ENCODE measurements at regions of chr7 and their contacts with region 1.

Region 1: GRCh38 chr7:156827587-156828203 is 65.3 kb downstream of the LMBR1 start:
- DNase-seq: peak; percentile 25 to 39
- ATAC-seq: peak in 1 of 2 experiments; percentile 53; a peak in 2 of 6 replicates
- H3K4me3 ChIP-seq: no peak overlapping the region
- H3K27ac ChIP-seq: no peak overlapping the region
- H3K4me1 ChIP-seq: peaks cover 4% of the 10 kb centered on the region; the same call in 1 of the 3 replicates
- CTCF ChIP-seq: peak; percentile 62
- EP300 ChIP-seq: no peak
- POLR2A ChIP-seq: no peak
- RAD21 ChIP-seq: peak; percentile 42 to 47; a peak in 3 of 5 replicates

Region 2: DNA sequence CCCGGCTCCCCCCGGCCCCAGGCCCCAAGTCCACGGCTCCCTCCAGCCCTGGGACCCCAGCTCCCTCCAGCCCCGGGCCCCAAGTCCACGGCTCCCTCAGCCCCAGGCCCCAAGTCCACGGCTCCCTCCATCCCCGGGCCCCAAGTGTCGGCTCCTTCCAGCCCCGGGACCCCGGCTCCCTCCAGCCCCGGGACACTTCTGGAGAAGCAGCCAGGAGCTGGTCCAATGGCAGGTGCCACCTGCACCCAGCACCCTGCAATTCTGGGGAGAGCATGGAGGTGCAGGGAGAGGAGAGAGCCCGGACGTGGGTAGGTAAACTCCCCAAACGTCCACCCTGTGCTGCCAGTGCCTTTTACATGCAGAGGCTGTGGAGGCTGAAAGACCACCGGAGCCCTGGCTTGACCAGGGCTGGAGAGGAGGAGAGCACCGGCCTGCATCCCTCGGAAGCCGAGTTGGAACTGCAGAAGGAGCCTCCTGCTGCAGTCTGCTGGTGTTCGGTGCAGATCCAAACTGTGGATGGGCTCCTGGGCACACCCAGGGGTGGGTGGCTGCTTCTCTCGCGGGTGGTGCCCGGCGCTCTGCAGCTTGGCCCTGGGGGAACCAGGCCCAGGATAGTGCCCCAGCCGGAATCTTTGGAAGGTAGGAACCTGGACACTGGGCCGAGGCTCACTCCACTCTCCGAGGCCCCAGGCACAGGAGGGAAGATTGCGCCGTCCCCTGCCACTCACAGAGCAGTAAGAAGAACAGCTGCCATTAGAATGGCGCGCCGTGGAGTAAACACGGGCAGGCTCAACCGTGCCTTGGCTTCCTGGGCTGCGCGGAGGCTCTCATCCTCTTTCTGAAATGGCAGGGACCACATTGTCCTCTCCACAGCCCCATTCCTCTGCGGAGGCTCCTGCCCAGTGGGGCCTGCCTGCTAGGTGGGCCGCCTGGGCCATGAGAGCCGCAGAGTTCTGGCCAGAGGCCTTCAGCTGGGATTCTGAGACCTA is 1030.1 kb before region 1 on chr7:
- CTCF ChIA-PET with region 1: interaction called, 15 read pairs
- POLR2A ChIA-PET with region 1: no interaction called
- DNase-seq: no peak
- ATAC-seq: peak; percentile 30 to 64; a peak in 5 of 6 replicates
- H3K4me3 ChIP-seq: peak overlapping the region; percentile 33; the same call in 2 of the 3 replicates
- H3K27ac ChIP-seq: peak overlapping the region; percentile 60 to 79; a peak in 4 of 6 replicates
- H3K4me1 ChIP-seq: 0 out of 3 replicates have a peak, but pooled peaks cover 3% of the 10 kb centered on the region
- CTCF ChIP-seq: no peak; the same call in 2 of the 3 replicates
- EP300 ChIP-seq: no peak
- POLR2A ChIP-seq: no peak
- RAD21 ChIP-seq: peak in 1 of 2 experiments; percentile 6; a peak in 1 of 5 replicates

Region 3: DNA sequence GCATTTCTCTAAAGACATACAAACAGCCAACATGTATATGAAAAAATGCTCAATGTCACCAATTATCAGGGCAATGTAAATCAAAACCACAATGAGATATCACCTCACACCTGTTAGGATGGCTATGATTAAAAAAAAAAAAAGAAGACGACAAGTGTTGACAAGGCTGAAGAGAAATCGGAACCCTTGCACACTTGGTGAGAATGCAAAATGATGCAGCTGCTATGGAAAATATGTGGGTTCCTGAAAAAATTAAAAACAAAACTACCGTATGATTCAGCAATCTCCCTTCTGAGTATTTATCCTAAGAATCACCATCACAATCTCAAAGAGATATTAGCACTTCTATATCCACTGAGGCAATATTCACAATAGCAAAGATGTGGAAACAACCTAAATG is 54.0 kb after region 1 on chr7:
- CTCF ChIA-PET with region 1: no interaction called
- POLR2A ChIA-PET with region 1: no interaction called
- DNase-seq: no peak
- ATAC-seq: no peak
- H3K4me3 ChIP-seq: no peak overlapping the region
- H3K27ac ChIP-seq: no peak overlapping the region
- H3K4me1 ChIP-seq: no peaks in the 10 kb centered on the region
- CTCF ChIP-seq: no peak
- EP300 ChIP-seq: no peak
- POLR2A ChIP-seq: no peak
- RAD21 ChIP-seq: no peak